RWPE1 (cell line): ENCODE measurements at regions of chr1 and their contacts with region 1.

Region 1: DNA sequence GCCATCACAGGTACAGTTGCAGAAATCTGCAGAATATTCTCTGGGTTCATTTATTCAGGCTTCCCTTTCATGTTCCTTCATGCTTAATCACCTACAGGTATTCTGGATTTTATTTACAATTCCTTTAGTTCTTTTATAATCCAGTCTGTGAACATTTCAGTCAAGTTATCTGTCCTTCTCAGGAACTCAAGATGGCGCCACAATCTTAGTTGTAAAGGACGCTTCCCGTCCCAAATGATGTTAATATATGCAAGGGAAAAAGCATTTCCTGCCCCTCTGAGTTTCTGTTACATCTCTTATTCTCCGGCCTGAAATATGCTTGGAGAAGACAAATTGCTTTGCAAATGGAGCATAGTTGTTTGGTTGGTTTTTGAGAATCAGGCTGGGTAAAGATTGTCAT is 19.3 kb downstream of the F3 start:
- DNase-seq: no peak
- H3K27ac ChIP-seq: no peak overlapping the region
- CTCF ChIP-seq: peak; percentile 55

Region 2: DNA sequence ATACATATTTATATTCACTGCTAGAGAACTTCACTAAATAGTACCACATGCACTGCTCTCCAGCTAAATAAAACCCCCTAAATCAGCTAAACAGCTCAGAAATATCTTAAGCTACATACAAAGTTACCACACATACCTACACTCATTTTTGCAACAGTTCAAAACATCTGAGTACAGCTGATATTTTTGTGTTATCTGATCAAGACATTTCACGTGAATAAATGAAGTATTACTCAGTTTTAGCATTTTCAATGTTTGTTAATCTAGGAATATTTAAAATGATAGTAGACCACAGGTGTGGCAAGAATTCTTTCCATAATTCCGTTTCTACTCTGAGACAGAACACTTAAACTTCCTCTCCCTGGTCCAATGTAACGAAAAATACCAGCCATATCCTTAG is 1758.2 kb before region 1 on chr1:
- CTCF ChIA-PET with region 1: no interaction called
- POLR2A ChIA-PET with region 1: interaction called, 14 read pairs
- DNase-seq: no peak
- H3K27ac ChIP-seq: no peak overlapping the region
- CTCF ChIP-seq: no peak

Region 3: GRCh38 chr1:94805912-94806311 is 283.6 kb after region 1 on chr1:
- CTCF ChIA-PET with region 1: interaction called, 13 read pairs
- POLR2A ChIA-PET with region 1: no interaction called
- DNase-seq: peak; percentile 62
- H3K27ac ChIP-seq: no peak overlapping the region
- CTCF ChIP-seq: peak; percentile 97